K562 (cell line): ENCODE measurements at regions of chr12 and their contacts with region 1.

Region 1: DNA sequence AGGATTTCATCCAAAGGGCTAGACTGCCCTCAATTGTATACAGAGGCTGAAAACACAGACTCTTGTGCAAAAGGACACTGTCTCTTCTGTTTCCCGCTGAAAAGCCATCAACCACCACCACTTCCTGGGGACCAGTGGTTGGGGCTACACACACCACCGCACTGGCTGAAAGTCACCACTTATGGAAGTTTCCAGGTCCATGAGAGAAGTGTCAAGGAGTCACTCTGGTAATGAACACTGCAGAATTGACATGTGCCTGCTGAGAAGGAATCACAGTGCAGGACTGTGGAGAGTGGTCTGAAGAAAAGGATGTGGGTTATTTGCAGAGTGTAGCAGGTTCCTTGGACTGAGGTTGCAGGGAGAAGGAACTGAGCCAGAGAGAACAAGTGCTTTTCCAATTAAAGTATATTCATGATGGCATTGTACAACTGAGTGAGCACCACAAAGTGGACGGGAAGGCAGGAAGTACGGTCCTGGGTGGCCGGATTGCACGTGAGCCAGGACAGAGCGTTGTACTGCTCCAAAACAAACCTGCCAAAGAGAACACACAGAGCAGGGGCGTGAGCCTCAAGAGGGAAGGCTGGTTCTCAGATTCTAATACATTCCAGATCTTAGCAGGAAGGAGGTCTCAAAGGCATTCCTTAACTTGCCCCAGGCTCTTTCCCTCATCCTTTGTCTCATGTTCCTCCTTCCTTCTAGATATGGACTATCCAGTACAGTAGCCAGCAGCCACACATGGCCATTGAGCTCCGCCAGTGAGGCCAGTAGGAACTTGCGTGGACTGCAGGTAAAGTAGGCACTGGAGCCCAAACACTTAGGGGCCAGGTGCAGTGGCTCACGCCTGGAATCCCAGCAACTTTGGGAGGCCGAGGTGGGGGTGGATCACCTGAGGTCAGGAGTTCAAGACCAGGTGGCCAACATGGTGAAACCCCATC is 316.4 kb downstream of the MED13L start:
- DNase-seq: no peak
- ATAC-seq: no peak
- H3K4me3 ChIP-seq: no peak overlapping the region
- H3K27ac ChIP-seq: no peak overlapping the region
- H3K4me1 ChIP-seq: no peaks in the 10 kb centered on the region
- H3K27me3 ChIP-seq: no peaks in the 10 kb centered on the region
- CTCF ChIP-seq: no peak
- EP300 ChIP-seq: no peak
- POLR2A ChIP-seq: no peak
- RAD21 ChIP-seq: no peak

Region 2: DNA sequence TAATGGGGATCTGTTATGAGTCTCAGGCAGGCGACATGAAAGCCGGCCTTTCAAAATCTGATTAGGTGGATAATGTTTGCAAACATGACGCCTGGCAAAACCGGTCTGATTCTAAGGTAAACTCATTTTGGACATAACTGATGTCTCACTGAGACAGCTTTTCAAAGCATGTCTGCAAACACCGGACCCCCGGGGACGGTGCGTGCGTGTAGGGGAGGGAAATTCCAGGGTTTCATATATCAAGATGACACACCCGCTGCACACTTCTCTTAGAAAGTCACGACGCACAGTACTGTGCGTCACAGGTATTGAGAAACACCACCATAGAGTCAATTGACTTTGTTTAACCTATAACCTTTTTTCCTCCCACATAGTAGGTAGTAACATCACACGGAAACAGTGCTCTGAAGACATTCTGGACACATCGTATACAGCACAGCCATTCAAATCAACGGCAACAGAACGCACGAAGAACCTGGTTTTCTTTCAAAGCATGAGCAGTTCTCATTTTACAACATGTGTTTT is 1181.9 kb after region 1 on chr12:
- CTCF ChIA-PET with region 1: no interaction called
- POLR2A ChIA-PET with region 1: no interaction called
- in situ Hi-C with region 1: loop called (anchors 25 kb)
- intact Hi-C with region 1: no loop called
- DNase-seq: no peak
- ATAC-seq: no peak
- H3K4me3 ChIP-seq: no peak overlapping the region
- H3K27ac ChIP-seq: no peak overlapping the region
- H3K4me1 ChIP-seq: peaks cover 0 to 5% of the 10 kb centered on the region in 2 experiments; a peak in 2 of 5 replicates
- H3K27me3 ChIP-seq: no peaks in the 10 kb centered on the region
- CTCF ChIP-seq: no peak
- EP300 ChIP-seq: no peak
- POLR2A ChIP-seq: no peak
- RAD21 ChIP-seq: no peak